ENCODE measurements at regions of chr10 and their contacts with region 1.

Region 1: DNA sequence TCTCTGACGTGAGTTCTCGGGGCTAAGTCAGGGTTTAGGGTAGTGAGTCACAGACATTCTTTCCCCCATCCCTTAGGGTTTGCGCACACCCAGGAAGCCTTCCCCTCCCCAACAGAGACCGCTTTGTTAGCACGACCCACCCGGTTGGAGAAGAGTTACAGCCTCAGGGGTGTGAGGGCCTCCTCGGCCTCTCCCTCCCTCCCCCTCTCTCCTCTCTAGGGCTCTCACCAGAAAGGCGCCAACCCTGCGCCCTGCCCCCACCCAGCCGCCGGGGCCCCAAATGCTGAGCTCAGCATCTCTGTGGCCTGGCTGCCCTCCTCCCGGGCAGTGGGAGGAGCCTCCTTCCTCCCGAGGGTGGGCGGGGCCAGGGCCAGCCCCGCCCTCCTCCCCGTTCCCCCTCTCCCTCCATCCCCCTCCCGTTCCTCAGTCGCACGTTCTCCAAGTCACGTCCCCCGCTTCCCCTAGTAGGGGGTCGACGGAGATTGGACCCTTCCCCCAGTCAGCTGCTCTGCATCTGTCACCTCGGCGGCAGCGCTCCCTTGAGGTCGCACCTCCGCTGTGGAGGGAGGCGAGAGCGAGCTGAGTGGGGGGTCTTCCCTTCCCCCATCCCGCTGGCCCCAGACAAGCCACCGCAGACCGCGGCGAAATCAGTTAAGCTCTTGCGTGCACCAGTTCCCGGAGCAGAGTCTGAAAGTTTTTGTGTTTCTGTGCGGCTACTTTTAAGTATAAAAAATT is 13.0 kb upstream of the DDIT4 start:
- DNase-seq: peak; percentile 85 to 89
- ATAC-seq: peak; percentile 70 to 89 (median 79)
- H3K4me3 ChIP-seq: peak overlapping the region; percentile 53
- H3K4me3 Mint-ChIP-seq: peak overlapping the region; percentile 87
- H3K27ac ChIP-seq: peak overlapping the region; percentile 82
- H3K27ac Mint-ChIP-seq: peak overlapping the region; percentile 98
- H3K4me1 ChIP-seq: peaks cover 73% of the 10 kb centered on the region
- H3K4me1 Mint-ChIP-seq: peaks cover 43 to 60% of the 10 kb centered on the region in 2 donors
- H3K27me3 ChIP-seq: no peaks in the 10 kb centered on the region
- H3K27me3 Mint-ChIP-seq: no peaks in the 10 kb centered on the region
- CTCF ChIP-seq: no peak

Region 2: DNA sequence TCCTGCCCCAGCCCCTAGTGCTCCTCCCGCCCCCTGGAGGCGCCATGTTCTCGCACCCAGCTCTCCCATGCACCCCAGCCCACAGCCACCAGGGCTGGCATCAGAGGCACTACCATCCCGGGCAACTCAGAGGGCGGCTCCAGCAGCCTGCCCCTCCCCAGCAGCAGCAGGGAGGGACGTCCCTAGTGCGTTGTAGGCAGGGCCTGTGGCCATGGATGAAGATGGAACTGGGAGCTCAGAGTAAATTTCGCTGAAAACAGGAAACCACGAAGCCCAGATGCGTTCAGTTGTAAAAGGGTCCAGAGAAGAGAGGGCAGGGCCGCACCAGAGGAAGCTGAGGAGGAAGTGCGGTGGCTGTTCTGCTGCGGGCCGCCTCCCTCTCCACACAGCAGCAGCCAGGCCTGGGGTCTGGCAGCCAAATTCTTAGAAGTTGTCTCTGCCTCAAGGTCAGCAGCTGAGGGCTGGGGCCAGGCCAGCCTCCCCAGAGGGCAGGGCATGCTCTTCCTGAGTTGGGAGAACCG is 512.0 kb before region 1 on chr10:
- intact Hi-C with region 1: no loop called
- DNase-seq: peak; percentile 52 to 90
- ATAC-seq: peak; percentile 75 to 88 (median 80)
- H3K4me3 ChIP-seq: no peak overlapping the region
- H3K4me3 Mint-ChIP-seq: peak overlapping the region; percentile 84
- H3K27ac ChIP-seq: peak overlapping the region; percentile 81
- H3K27ac Mint-ChIP-seq: peak overlapping the region; percentile 96
- H3K4me1 ChIP-seq: peaks cover 99% of the 10 kb centered on the region
- H3K4me1 Mint-ChIP-seq: peaks cover 87 to 95% of the 10 kb centered on the region in 2 donors
- H3K27me3 ChIP-seq: no peaks in the 10 kb centered on the region
- H3K27me3 Mint-ChIP-seq: no peaks in the 10 kb centered on the region
- CTCF ChIP-seq: no peak

Region 3: DNA sequence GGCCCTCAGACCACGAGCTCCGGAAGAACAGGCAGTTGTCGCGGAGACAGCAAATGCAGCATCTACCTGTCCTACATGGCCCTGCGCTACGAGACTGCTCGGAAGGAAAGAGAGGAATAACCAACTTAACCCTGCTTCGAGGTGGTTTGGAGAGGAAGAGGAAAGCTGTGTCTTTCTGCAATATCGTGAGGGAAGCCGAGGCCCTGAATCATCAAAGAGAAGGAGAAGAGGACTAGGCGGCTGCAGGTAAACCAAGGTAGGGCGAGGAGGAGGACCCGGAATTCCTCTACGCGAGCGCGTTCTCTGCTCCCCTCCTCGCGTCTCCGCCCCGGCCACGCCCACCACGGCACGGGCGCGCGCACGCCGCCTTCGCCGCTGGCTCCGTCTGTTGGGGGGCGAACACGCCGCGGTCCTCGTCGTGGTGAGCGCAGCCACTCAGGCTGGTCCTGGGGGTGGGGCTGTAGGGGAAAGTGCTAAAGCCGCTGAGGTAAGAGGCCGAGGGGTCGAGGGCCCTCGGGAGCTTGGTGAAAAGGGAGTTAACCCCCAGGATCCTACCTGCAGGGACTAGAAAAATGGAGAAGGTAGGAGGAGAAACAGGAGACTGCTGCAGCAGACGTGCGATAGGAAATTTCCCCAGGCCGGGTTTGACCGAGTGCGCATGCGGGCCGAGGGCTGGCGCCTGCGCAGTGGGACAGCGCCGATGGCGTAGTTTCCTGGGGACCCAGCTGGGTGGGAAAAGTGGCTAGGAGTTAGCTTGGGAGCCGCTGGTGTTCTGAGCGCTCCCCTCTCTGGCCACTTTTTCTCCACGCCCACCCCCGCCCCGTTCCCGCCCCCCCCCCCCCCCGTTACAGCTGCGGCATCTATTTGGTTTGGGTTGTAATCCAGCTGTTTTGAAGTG is 44.9 kb before region 1 on chr10 and contains the starts of genes ANAPC16 and ASCC1:
- intact Hi-C with region 1: loop called (anchors 1 kb)
- DNase-seq: peak; percentile 95 to 96
- ATAC-seq: peak; percentile 93 to 97 (median 93)
- H3K4me3 ChIP-seq: peak within 1 kb of the TSS; percentile 66
- H3K4me3 Mint-ChIP-seq: peak within 1 kb of the TSS; percentile 97
- H3K27ac ChIP-seq: peak within 1 kb of the TSS; percentile 93
- H3K27ac Mint-ChIP-seq: peak within 1 kb of the TSS; percentile 98 to 100
- H3K4me1 ChIP-seq: peaks cover 28% of the 10 kb centered on the region
- H3K4me1 Mint-ChIP-seq: peaks cover 20 to 45% of the 10 kb centered on the region in 2 donors
- H3K27me3 ChIP-seq: no peaks in the 10 kb centered on the region
- H3K27me3 Mint-ChIP-seq: no peaks in the 10 kb centered on the region
- CTCF ChIP-seq: no peak
- total RNA-seq, gene ANAPC16: 70.9 to 77.0 (median 71.0) TPM
- total RNA-seq, gene ASCC1: 26.0 to 35.2 (median 29.3) TPM

Region 4: GRCh38 chr10:72226418-72227027 is 34.2 kb before region 1 on chr10:
- intact Hi-C with region 1: no loop called
- DNase-seq: no peak
- ATAC-seq: no peak
- H3K4me3 ChIP-seq: no peak overlapping the region
- H3K4me3 Mint-ChIP-seq: no peak overlapping the region
- H3K27ac ChIP-seq: no peak overlapping the region
- H3K27ac Mint-ChIP-seq: peak overlapping the region; percentile 68 to 71
- H3K4me1 ChIP-seq: peaks cover 8% of the 10 kb centered on the region
- H3K4me1 Mint-ChIP-seq: peaks cover 14 to 32% of the 10 kb centered on the region in 2 donors
- H3K27me3 ChIP-seq: no peaks in the 10 kb centered on the region
- H3K27me3 Mint-ChIP-seq: no peaks in the 10 kb centered on the region
- CTCF ChIP-seq: no peak

Region 5: GRCh38 chr10:72248468-72249151 is 12.1 kb before region 1 on chr10:
- intact Hi-C with region 1: loop called (anchors 1 kb)
- DNase-seq: peak; percentile 58 to 88
- ATAC-seq: peak; percentile 90 to 95 (median 94)
- H3K4me3 ChIP-seq: peak overlapping the region; percentile 26
- H3K4me3 Mint-ChIP-seq: peak overlapping the region; percentile 88
- H3K27ac ChIP-seq: peak overlapping the region; percentile 88
- H3K27ac Mint-ChIP-seq: peak overlapping the region; percentile 88 to 89
- H3K4me1 ChIP-seq: peaks cover 97% of the 10 kb centered on the region
- H3K4me1 Mint-ChIP-seq: peaks cover 69 to 87% of the 10 kb centered on the region in 2 donors
- H3K27me3 ChIP-seq: no peaks in the 10 kb centered on the region
- H3K27me3 Mint-ChIP-seq: no peaks in the 10 kb centered on the region
- CTCF ChIP-seq: no peak

Region 6: GRCh38 chr10:72273410-72274212 is 12.9 kb after region 1 on chr10 and contains the start of gene DDIT4:
- intact Hi-C with region 1: loop called (anchors 1 kb)
- DNase-seq: peak; percentile 98
- ATAC-seq: peak; percentile 90 to 98 (median 90)
- H3K4me3 ChIP-seq: peak within 1 kb of the TSS; percentile 90
- H3K4me3 Mint-ChIP-seq: peak within 1 kb of the TSS; percentile 99
- H3K27ac ChIP-seq: peak within 1 kb of the TSS; percentile 82
- H3K27ac Mint-ChIP-seq: peak within 1 kb of the TSS; percentile 91 to 94
- H3K4me1 ChIP-seq: peaks cover 48% of the 10 kb centered on the region
- H3K4me1 Mint-ChIP-seq: peaks cover 39 to 64% of the 10 kb centered on the region in 2 donors
- H3K27me3 ChIP-seq: no peaks in the 10 kb centered on the region
- H3K27me3 Mint-ChIP-seq: no peaks in the 10 kb centered on the region
- CTCF ChIP-seq: no peak
- total RNA-seq, gene DDIT4: 174 to 232 (median 200) TPM

Region 7: GRCh38 chr10:72297968-72298773 is 37.4 kb after region 1 on chr10:
- intact Hi-C with region 1: loop called (anchors 1 kb)
- DNase-seq: peak; percentile 88 to 95
- ATAC-seq: peak; percentile 74 to 85 (median 74)
- H3K4me3 ChIP-seq: peak overlapping the region; percentile 65
- H3K4me3 Mint-ChIP-seq: peak overlapping the region; percentile 89
- H3K27ac ChIP-seq: peak overlapping the region; percentile 98
- H3K27ac Mint-ChIP-seq: peak overlapping the region; percentile 97 to 99
- H3K4me1 ChIP-seq: peaks cover 51% of the 10 kb centered on the region
- H3K4me1 Mint-ChIP-seq: peaks cover 35 to 59% of the 10 kb centered on the region in 2 donors
- H3K27me3 ChIP-seq: no peaks in the 10 kb centered on the region
- H3K27me3 Mint-ChIP-seq: no peaks in the 10 kb centered on the region
- CTCF ChIP-seq: no peak

Region 8: GRCh38 chr10:72319416-72320254 is 58.9 kb after region 1 on chr10:
- intact Hi-C with region 1: loop called (anchors 1 kb)
- DNase-seq: peak; percentile 89 to 95
- ATAC-seq: peak; percentile 68 to 87 (median 83)
- H3K4me3 ChIP-seq: peak overlapping the region; percentile 37
- H3K4me3 Mint-ChIP-seq: peak overlapping the region; percentile 75
- H3K27ac ChIP-seq: peak overlapping the region; percentile 95
- H3K27ac Mint-ChIP-seq: peak overlapping the region; percentile 85 to 97
- H3K4me1 ChIP-seq: peaks cover 85% of the 10 kb centered on the region
- H3K4me1 Mint-ChIP-seq: peaks cover 52 to 69% of the 10 kb centered on the region in 2 donors
- H3K27me3 ChIP-seq: no peaks in the 10 kb centered on the region
- H3K27me3 Mint-ChIP-seq: no peaks in the 10 kb centered on the region
- CTCF ChIP-seq: no peak

Region 9: DNA sequence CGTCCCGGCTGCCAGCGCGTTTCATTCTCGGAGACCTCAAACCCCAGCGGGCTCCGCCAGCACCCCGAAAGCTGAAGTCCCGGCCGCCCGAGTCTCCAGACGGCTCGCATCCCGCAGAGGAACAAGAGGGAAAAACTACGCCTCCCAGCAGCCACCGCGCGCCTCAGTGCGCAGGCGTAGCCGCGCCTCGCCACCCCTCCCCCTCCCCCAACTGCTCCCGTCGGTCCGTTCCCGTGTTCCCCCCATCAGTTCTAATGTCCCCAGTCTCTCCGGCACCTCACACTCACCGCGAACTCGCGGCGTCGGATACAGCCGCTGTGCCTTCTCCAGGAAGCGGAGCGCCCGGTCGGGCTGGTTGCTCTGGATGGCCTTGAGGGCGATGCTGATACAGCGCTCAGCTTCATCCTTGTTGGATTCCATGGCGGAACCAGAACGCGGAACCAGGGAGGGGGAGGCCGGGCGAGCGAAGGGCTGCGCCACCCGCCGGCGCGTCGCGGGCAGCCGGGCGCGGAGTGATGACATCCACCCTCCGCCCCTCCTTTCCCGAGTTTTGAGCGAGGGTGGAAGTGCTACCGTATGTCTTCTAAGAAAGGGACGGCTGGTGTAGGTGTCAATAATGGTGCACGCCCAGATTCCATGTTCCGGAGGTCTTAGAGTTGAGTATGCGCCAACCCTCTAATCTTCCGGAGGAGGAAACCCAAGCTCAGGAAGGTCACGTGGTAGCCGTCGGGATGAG is 93.9 kb after region 1 on chr10 and contains the start of gene DNAJB12:
- intact Hi-C with region 1: no loop called
- DNase-seq: peak; percentile 88 to 95
- ATAC-seq: peak; percentile 84 to 92 (median 85)
- H3K4me3 ChIP-seq: peak within 1 kb of the TSS; percentile 80
- H3K4me3 Mint-ChIP-seq: peak within 1 kb of the TSS; percentile 96
- H3K27ac ChIP-seq: peak within 1 kb of the TSS; percentile 90
- H3K27ac Mint-ChIP-seq: peak within 1 kb of the TSS; percentile 92 to 94
- H3K4me1 ChIP-seq: peaks cover 21% of the 10 kb centered on the region
- H3K4me1 Mint-ChIP-seq: peaks cover 36 to 47% of the 10 kb centered on the region in 2 donors
- H3K27me3 ChIP-seq: no peaks in the 10 kb centered on the region
- H3K27me3 Mint-ChIP-seq: no peaks in the 10 kb centered on the region
- CTCF ChIP-seq: no peak
- total RNA-seq, gene DNAJB12: 47.3 to 54.2 (median 48.7) TPM

Region 10: GRCh38 chr10:73096449-73097304 is 835.9 kb after region 1 on chr10 and contains the start of gene P4HA1:
- intact Hi-C with region 1: loop called (anchors 5 kb)
- DNase-seq: peak; percentile 97 to 99
- ATAC-seq: peak; percentile 89 to 97 (median 91)
- H3K4me3 ChIP-seq: peak within 1 kb of the TSS; percentile 63
- H3K4me3 Mint-ChIP-seq: peak within 1 kb of the TSS; percentile 97
- H3K27ac ChIP-seq: peak within 1 kb of the TSS; percentile 97
- H3K27ac Mint-ChIP-seq: peak within 1 kb of the TSS; percentile 96 to 98
- H3K4me1 ChIP-seq: no peaks in the 10 kb centered on the region
- H3K4me1 Mint-ChIP-seq: peaks cover 17 to 31% of the 10 kb centered on the region in 2 donors
- H3K27me3 ChIP-seq: no peaks in the 10 kb centered on the region
- H3K27me3 Mint-ChIP-seq: no peaks in the 10 kb centered on the region
- CTCF ChIP-seq: peak; percentile 58
- total RNA-seq, gene P4HA1: 13.0 to 16.3 (median 13.9) TPM